PC-9 (cell line): ENCODE measurements at regions of chr11 and their contacts with region 1.

Region 1: GRCh38 chr11:8138526-8138925 is 30.3 kb downstream of the RIC3 start:
- DNase-seq: no peak
- H3K4me3 ChIP-seq: no peak overlapping the region
- H3K27ac ChIP-seq: no peak overlapping the region
- H3K4me1 ChIP-seq: no peaks in the 10 kb centered on the region
- H3K27me3 ChIP-seq: no peaks in the 10 kb centered on the region
- CTCF ChIP-seq: no peak

Region 2: DNA sequence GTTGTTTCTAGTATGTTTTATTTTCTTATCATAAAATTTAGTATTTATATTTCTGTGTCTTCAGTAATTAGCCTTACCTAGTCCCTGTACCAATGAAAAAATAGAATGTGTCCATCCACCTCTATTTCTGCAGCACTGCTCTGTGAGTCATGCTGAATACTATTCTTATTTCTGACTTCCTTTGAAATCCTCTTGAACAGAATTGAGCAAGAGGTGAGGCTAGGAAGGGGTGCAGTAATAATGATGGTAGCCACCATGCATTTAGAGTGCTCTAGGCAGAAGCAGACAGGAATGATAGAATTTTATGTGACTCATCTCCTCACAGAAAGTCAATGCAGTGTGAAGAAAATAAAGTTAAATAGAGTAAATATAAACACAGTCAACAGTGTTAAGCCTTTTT is 267.5 kb before region 1 on chr11:
- CTCF ChIA-PET with region 1: no interaction called
- POLR2A ChIA-PET with region 1: no interaction called
- intact Hi-C with region 1: no loop called
- DNase-seq: no peak
- H3K4me3 ChIP-seq: no peak overlapping the region
- H3K27ac ChIP-seq: no peak overlapping the region
- H3K4me1 ChIP-seq: no peaks in the 10 kb centered on the region
- H3K27me3 ChIP-seq: no peaks in the 10 kb centered on the region
- CTCF ChIP-seq: no peak

Region 3: GRCh38 chr11:8033305-8034105 is 105.0 kb before region 1 on chr11:
- CTCF ChIA-PET with region 1: no interaction called
- POLR2A ChIA-PET with region 1: no interaction called
- intact Hi-C with region 1: no loop called
- DNase-seq: peak in 1 of 2 experiments; percentile 56
- H3K4me3 ChIP-seq: no peak overlapping the region
- H3K27ac ChIP-seq: no peak overlapping the region
- H3K4me1 ChIP-seq: no peaks in the 10 kb centered on the region
- H3K27me3 ChIP-seq: 0 out of 2 replicates have a peak, but pooled peaks cover 5% of the 10 kb centered on the region
- CTCF ChIP-seq: peak; percentile 79

Region 4: GRCh38 chr11:8126649-8127289 is 11.8 kb before region 1 on chr11:
- CTCF ChIA-PET with region 1: interaction called, 17 read pairs
- POLR2A ChIA-PET with region 1: interaction called, 5 read pairs
- intact Hi-C with region 1: no loop called
- DNase-seq: no peak
- H3K4me3 ChIP-seq: no peak overlapping the region
- H3K27ac ChIP-seq: no peak overlapping the region
- H3K4me1 ChIP-seq: no peaks in the 10 kb centered on the region
- H3K27me3 ChIP-seq: peaks cover 18% of the 10 kb centered on the region; the same call in 1 of the 2 replicates
- CTCF ChIP-seq: no peak

Region 5: DNA sequence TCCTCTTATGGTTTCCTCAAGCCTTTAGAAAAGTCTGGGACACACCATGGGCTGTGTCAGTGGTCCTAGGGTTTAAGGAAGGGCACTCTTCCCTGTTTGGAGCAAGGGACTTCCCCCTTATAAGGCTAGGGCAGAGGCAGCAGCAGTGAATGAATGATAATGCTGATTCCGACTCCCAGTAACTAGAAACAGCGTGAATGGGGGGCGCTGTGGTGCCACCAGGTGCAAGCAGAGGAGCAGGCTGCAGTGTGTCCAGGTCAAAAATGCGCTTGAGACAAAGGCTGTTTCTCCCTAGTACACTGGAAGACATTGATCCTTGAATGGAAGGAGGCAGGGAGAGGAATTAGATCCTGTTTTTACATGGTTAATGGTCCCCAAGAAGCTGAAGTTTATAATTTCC is 41.9 kb after region 1 on chr11:
- CTCF ChIA-PET with region 1: no interaction called
- POLR2A ChIA-PET with region 1: no interaction called
- intact Hi-C with region 1: no loop called
- DNase-seq: no peak
- H3K4me3 ChIP-seq: no peak overlapping the region
- H3K27ac ChIP-seq: no peak overlapping the region
- H3K4me1 ChIP-seq: no peaks in the 10 kb centered on the region
- H3K27me3 ChIP-seq: peaks cover 22% of the 10 kb centered on the region; the same call in 1 of the 2 replicates
- CTCF ChIP-seq: no peak